SK-N-SH (cell line): ENCODE measurements at regions of chr7 and their contacts with region 1.

Region 1: DNA sequence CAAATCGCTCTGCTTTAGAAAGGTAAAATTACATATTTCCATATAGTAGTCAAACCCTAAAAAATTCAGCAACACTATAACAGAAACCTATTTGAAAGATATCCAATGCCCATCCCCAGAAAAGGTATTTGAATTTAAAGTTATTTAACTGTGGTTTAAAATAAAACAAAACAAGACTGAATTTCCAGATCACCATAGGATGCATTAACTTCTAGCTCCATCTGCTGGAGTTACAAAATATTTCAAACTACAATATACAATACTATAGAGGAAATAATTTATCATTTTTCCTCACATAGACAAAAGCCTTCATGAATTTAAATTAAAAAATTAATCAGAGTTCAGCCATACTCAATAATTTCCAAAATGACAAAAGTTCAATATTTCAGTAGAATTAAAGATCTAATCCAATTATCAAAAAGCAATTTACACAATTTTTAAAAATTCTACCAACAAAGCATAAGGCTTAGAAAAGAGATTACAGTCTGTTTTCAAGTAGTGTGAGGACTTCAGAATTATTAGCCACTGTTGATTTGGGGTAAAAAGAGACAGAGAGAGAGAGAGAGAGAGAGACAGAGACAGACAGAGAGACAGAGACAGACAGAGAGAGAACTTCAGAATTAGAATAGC is 75.9 kb downstream of the LMBR1 start:
- DNase-seq: peak; percentile 44
- H3K4me3 ChIP-seq: no peak overlapping the region
- H3K27ac ChIP-seq: peak overlapping the region in 1 of 2 experiments; percentile 20; a peak in 1 of 4 replicates
- H3K4me1 ChIP-seq: peaks cover 0 to 11% of the 10 kb centered on the region in 2 experiments; a peak in 2 of 4 replicates
- H3K27me3 ChIP-seq: no peaks in the 10 kb centered on the region
- CTCF ChIP-seq: peak; percentile 88
- EP300 ChIP-seq: no peak
- RAD21 ChIP-seq: peak; percentile 98

Region 2: GRCh38 chr7:156780724-156781455 is 36.2 kb before region 1 on chr7:
- CTCF ChIA-PET with region 1: interaction called, 28 read pairs
- POLR2A ChIA-PET with region 1: interaction called, 3 read pairs
- DNase-seq: no peak
- H3K4me3 ChIP-seq: no peak overlapping the region
- H3K27ac ChIP-seq: peak overlapping the region in 1 of 2 experiments; percentile 96; a peak in 2 of 4 replicates
- H3K4me1 ChIP-seq: peaks cover 0 to 46% of the 10 kb centered on the region in 2 experiments; a peak in 2 of 4 replicates
- H3K27me3 ChIP-seq: no peaks in the 10 kb centered on the region
- CTCF ChIP-seq: no peak
- EP300 ChIP-seq: no peak
- RAD21 ChIP-seq: no peak

Region 3: DNA sequence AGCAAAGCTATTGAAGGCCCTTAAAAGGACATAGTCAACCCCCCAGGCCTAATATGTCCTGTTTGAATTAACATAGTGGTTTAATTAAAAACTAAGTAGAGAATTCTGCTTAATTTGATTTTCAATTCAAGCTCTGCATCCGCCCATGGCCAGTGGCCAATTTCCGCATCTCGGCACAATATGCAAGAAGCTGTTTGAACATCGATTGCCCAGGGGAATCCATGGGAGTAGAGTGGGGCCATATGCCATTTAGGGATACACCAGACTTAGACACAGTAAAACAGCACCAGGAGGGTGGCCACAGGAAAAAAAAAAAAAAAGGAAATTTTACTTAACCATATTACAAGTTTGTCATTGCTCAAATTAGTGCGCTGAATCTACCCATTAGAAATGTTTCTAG is 24.4 kb before region 1 on chr7:
- CTCF ChIA-PET with region 1: interaction called, 11 read pairs
- POLR2A ChIA-PET with region 1: no interaction called
- DNase-seq: peak; percentile 67
- H3K4me3 ChIP-seq: no peak overlapping the region
- H3K27ac ChIP-seq: peak overlapping the region in 1 of 2 experiments; percentile 100; a peak in 2 of 4 replicates
- H3K4me1 ChIP-seq: peaks cover 0 to 66% of the 10 kb centered on the region in 2 experiments; a peak in 2 of 4 replicates
- H3K27me3 ChIP-seq: no peaks in the 10 kb centered on the region
- CTCF ChIP-seq: no peak
- EP300 ChIP-seq: peak in 1 of 2 experiments; percentile 98; a peak in 2 of 4 replicates
- RAD21 ChIP-seq: peak; percentile 25; the same call in 1 of the 2 replicates

Region 4: GRCh38 chr7:156827587-156828203 is 10.6 kb after region 1 on chr7:
- CTCF ChIA-PET with region 1: interaction called, 11 read pairs
- POLR2A ChIA-PET with region 1: no interaction called
- DNase-seq: peak; percentile 41
- H3K4me3 ChIP-seq: no peak overlapping the region
- H3K27ac ChIP-seq: no peak overlapping the region
- H3K4me1 ChIP-seq: no peaks in the 10 kb centered on the region
- H3K27me3 ChIP-seq: no peaks in the 10 kb centered on the region
- CTCF ChIP-seq: peak; percentile 70
- EP300 ChIP-seq: no peak
- RAD21 ChIP-seq: peak; percentile 81

Region 5: DNA sequence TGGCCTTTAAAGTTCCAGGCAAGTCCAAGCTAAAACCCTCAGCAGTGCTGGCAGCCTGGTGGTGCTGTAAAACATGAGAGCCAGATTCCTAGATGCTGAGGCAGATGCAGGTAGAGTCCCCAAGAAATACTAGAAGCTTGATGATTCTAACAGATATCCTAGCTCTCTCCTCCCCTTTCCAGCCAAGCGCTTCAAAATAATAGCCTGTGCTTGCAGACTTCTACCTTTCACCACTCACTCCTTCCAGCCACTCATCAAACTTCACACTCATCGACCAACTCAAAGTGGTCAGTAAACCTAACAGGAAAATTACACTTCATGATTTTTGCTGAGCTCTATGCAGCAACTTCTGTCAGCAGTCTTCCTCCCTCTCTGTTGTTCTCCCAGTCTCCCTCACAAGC is 25.7 kb after region 1 on chr7:
- CTCF ChIA-PET with region 1: interaction called, 11 read pairs
- POLR2A ChIA-PET with region 1: no interaction called
- DNase-seq: peak; percentile 18
- H3K4me3 ChIP-seq: no peak overlapping the region
- H3K27ac ChIP-seq: peak overlapping the region in 1 of 2 experiments; percentile 56; a peak in 2 of 4 replicates
- H3K4me1 ChIP-seq: peaks cover 4 to 19% of the 10 kb centered on the region in 2 experiments; a peak in 3 of 4 replicates
- H3K27me3 ChIP-seq: no peaks in the 10 kb centered on the region
- CTCF ChIP-seq: no peak
- EP300 ChIP-seq: no peak
- RAD21 ChIP-seq: no peak

Region 6: DNA sequence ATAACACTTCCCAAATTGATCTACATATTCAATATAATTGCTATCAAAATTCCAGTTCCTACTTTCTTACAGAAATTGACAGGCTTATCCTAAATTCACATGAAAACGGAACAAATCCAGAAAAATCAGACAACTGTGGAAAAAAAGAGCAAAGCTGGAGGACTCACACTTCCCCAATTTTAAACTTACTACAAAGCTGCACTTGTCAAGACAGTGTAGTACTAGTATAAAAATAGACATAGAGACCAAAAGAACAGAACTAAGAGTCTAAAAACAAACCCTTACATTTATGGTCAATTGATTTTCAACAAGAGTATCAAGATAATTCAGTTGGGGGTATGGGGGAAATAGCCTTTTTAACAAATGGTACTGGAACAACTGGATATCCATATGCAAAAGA is 48.4 kb after region 1 on chr7:
- CTCF ChIA-PET with region 1: no interaction called
- POLR2A ChIA-PET with region 1: no interaction called
- DNase-seq: no peak
- H3K4me3 ChIP-seq: no peak overlapping the region
- H3K27ac ChIP-seq: no peak overlapping the region
- H3K4me1 ChIP-seq: no peaks in the 10 kb centered on the region
- H3K27me3 ChIP-seq: no peaks in the 10 kb centered on the region
- CTCF ChIP-seq: no peak
- EP300 ChIP-seq: no peak
- RAD21 ChIP-seq: no peak